ENCODE measurements at regions of chr10 and their contacts with region 1.

Region 1: DNA sequence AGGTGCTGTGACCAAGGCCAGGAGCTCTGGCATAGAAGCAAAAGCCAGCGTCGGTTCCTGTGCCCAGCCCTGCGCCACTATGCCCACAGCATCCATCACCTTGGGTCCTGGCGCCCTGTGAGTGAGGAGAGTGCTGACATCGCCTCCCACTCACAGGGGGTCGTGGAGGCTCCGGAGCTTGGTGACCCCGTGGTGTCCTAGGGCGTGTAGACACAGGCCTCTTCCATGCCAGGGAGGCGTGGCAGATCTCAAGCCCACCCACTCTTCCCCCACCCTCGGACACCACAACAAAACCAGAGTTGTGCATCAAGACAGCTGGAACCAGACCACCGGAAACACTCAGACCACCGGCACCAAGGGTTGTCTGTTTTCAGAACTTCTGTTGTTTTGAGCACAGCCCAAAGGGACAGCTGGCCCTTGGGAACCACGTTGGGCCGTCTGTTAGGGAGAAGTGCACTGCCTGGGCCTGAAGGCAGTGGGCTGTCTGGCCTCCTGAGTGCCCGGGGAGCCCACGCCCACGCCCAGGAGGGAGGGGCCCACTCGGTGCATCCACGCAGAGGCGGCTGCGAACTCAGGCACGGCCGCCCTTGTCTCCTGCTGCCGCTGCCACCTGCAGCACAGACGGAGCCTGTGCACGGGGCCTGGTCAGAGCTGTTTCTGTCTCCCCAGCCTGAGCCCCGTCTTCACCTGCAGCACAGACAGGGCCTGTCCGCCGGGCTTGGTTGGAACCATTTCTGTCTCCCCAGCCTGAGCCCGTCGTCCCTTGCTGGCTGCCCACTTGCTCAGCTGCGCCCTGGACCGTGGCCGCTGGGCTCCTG is 106.3 kb downstream of the INPP5A start:
- DNase-seq: no peak
- H3K4me3 ChIP-seq: no peak overlapping the region
- H3K4me3 Mint-ChIP-seq: no peak overlapping the region
- H3K27ac ChIP-seq: no peak overlapping the region
- H3K27ac Mint-ChIP-seq: no peak overlapping the region
- H3K4me1 ChIP-seq: no peaks in the 10 kb centered on the region
- H3K4me1 Mint-ChIP-seq: peaks cover 0 to 6% (median 1%) of the 10 kb centered on the region in 3 donors
- H3K27me3 ChIP-seq: no peaks in the 10 kb centered on the region
- H3K27me3 Mint-ChIP-seq: peaks cover 0 to 1% of the 10 kb centered on the region in 2 donors

Region 2: DNA sequence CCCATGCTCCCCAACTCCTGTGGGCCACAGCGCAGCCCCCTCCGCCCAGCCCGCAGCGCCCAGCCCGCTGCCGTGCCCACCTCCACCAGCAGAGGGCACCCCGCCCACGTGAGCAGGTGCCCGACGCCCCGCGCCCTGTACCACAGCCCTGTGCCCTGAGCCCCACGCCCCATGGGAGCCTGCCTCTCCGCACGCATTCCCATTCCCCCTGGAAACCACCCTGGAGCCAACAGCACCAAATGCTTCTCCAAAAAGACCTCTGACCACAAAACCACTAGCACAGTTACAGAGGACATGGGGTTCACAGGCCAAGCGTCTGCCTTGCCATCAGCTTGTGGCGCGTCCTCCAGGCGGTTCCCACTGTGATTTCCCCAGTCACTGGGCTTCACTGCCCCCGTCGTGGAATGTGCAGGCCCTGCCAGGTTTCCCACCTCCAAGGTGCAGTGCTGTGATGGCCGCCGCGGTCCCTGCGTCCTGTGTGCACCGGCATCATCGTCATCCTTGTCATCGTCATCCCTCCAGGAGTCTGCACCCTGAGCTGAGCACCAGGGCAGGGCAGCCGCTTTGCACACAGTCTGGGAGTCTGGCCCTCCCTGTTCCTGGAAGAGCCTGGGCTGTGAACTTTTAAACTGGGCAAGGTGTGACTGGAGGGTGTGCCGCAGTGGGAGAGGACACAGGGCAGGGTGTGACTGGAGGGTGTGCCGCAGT is 185.2 kb before region 1 on chr10:
- CTCF ChIA-PET with region 1: interaction called, 11 read pairs
- POLR2A ChIA-PET with region 1: no interaction called
- DNase-seq: peak; percentile 51 to 73 (median 59)
- H3K4me3 ChIP-seq: no peak overlapping the region
- H3K4me3 Mint-ChIP-seq: no peak overlapping the region
- H3K27ac ChIP-seq: no peak overlapping the region
- H3K27ac Mint-ChIP-seq: peak overlapping the region in 2 of 8 donors; percentile 24 to 66
- H3K4me1 ChIP-seq: no peaks in the 10 kb centered on the region
- H3K4me1 Mint-ChIP-seq: peaks cover 0 to 3% (median 0%) of the 10 kb centered on the region in 3 donors
- H3K27me3 ChIP-seq: no peaks in the 10 kb centered on the region
- H3K27me3 Mint-ChIP-seq: peaks cover 0 to 1% of the 10 kb centered on the region in 2 donors

Region 3: GRCh38 chr10:132627666-132628531 is 16.0 kb before region 1 on chr10:
- CTCF ChIA-PET with region 1: no interaction called
- POLR2A ChIA-PET with region 1: no interaction called
- DNase-seq: peak in 1 of 5 donors; percentile 36
- H3K4me3 ChIP-seq: no peak overlapping the region
- H3K4me3 Mint-ChIP-seq: peak overlapping the region in 2 of 7 donors; percentile 28 to 61
- H3K27ac ChIP-seq: no peak overlapping the region
- H3K27ac Mint-ChIP-seq: peak overlapping the region in 2 of 8 donors; percentile 73 to 84
- H3K4me1 ChIP-seq: no peaks in the 10 kb centered on the region
- H3K4me1 Mint-ChIP-seq: peaks cover 21 to 42% (median 22%) of the 10 kb centered on the region in 3 donors
- H3K27me3 ChIP-seq: no peaks in the 10 kb centered on the region
- H3K27me3 Mint-ChIP-seq: no peaks in the 10 kb centered on the region

Region 4: DNA sequence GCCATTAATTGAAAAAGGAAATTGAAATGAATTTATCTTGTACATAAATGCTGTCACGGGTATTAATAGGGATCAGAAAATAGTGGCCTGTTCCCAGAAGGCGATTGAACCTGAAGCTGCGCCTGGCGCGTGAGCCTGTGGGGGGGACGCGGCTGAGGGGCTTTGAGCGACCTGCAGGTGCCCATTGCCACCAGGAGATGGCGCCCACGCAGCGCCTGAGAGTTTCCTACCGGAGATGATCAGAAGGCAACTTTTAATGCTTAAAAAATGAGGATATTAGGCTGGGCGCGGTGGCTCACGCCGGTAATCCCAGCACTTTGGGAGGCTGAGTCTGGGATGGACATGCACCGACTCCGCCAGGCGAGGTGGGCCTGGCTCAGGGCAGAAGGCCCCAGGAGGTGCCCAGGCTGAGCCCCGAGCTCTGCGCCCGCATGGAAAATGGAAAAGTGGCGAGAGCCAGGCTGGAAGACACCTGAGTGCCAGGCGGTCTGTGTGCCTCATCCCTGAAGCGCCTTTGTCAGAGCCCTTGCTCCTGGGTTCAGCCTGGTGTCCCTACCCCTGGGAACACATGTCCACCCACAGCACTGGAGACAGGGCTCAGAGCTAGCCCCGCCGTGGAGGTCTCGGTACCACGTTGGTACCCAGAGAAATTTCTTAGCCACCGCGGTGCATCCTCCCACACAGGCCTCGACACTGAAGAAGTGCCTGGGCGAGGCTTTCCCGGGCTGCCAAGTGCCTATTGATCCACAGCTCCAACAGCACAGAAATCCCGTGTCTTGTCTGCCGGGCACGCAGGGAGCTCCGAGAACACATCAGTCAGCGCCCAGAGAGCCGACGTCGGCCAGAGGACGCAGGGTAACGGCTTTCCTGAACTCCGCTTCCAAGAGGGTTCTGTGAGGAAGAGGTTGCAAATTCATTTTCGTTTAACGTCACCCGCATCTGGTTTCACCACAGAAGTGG is 11.1 kb after region 1 on chr10:
- CTCF ChIA-PET with region 1: interaction called, 10 read pairs
- POLR2A ChIA-PET with region 1: no interaction called
- DNase-seq: peak; percentile 27 to 62 (median 29)
- H3K4me3 ChIP-seq: no peak overlapping the region
- H3K4me3 Mint-ChIP-seq: no peak overlapping the region
- H3K27ac ChIP-seq: no peak overlapping the region
- H3K27ac Mint-ChIP-seq: peak overlapping the region in 4 of 8 donors; percentile 27 to 91 (median 49)
- H3K4me1 ChIP-seq: no peaks in the 10 kb centered on the region
- H3K4me1 Mint-ChIP-seq: peaks cover 2 to 4% (median 3%) of the 10 kb centered on the region in 3 donors
- H3K27me3 ChIP-seq: no peaks in the 10 kb centered on the region
- H3K27me3 Mint-ChIP-seq: peaks cover 0 to 1% of the 10 kb centered on the region in 2 donors

Region 5: DNA sequence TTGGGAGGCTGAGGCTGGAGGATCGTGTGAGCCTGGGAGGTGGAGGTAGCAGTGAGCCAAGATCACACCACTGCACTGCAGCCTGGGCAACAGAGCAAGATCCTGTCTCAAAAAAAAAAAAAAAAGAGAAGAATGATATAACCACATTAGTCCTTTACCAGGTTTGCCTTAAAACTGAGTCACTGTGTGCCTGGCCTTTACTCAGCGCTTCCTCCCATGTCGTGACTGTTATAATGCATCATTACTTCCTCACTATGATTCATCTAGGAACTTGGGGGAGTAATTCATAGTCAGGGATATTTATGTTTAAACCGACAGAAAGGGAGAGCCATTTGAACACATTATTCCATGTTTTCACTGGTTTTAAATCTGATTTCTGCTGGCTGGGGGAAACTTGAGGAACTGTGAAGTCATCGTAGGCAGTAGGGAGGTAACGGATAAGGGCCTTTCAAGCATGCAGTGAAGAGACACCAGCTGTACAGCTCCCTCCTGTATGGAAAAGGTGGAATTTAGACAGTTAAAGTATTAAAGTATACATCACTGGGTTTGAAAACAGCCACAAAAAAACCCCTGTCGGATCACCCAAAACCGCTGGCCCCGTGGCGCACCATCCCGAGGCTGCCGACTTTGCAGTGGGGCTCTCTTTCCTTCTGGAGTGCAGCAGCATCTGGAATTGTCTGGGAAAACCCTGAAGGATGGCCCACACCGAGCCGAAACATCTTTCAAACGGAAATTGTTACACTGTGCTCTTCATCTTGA is 22.2 kb after region 1 on chr10:
- CTCF ChIA-PET with region 1: no interaction called
- POLR2A ChIA-PET with region 1: no interaction called
- DNase-seq: peak in 1 of 5 donors; percentile 22
- H3K4me3 ChIP-seq: no peak overlapping the region
- H3K4me3 Mint-ChIP-seq: no peak overlapping the region
- H3K27ac ChIP-seq: no peak overlapping the region
- H3K27ac Mint-ChIP-seq: peak overlapping the region in 1 of 8 donors; percentile 5
- H3K4me1 ChIP-seq: no peaks in the 10 kb centered on the region
- H3K4me1 Mint-ChIP-seq: no peaks in the 10 kb centered on the region
- H3K27me3 ChIP-seq: no peaks in the 10 kb centered on the region
- H3K27me3 Mint-ChIP-seq: no peaks in the 10 kb centered on the region

Measured in CD8-positive, alpha-beta memory T cell (primary cell).